Naive thymus-derived CD4-positive, alpha-beta T cell (primary cell): ENCODE measurements at regions of chr7 and their contacts with region 1.

Region 1: DNA sequence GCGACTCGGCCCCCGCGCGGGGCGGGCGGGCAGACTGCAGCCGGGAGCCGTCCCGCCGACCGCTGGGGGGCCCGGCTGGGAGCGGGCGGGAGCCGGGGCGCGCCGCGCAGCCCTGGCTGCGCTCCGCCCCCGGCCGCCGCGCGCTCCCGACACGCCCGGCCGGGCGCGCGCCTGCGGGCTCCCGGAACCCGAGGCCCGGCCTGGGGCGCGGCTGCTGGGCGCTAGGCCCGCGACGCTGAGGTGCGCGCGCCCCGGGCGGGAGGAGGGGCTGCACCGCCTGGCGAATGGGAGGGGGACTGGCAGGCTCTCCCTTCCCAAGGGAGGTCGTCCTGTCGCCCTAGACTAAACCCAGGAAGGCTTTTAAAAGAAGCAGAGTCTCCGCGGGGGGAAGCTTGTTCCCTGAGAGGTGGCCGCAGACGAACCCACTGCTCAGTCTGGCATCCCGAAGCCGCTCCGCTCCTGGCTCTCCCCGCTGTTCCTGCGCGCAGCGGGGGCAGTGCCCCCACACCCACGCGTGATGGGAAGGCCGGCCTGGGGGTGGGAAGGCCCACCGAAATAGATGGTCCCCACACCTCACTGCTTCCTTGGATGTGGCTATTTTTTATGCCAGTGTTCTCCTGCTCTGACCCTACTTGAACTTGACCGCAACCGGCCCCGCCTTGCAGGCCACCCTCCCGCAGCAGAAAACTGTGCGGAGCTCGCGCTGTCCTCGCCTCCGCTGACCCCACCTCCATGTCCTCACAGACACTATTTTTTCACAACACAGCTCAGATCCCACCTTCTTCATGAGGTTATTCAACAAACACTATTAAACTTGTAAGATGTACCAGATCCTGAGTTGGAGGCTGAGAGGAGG is at the start of gene VOPP1:
- DNase-seq: peak; percentile 40 to 79 (median 66)
- ATAC-seq: peak; percentile 81
- H3K4me3 ChIP-seq: peak within 1 kb of the TSS; percentile 87
- H3K4me3 Mint-ChIP-seq: peak within 1 kb of the TSS; percentile 87 to 100 (median 94)
- H3K27ac ChIP-seq: peak within 1 kb of the TSS; percentile 79
- H3K27ac Mint-ChIP-seq: peak within 1 kb of the TSS; percentile 85 to 96 (median 92)
- H3K4me1 ChIP-seq: peaks cover 42 to 45% of the 10 kb centered on the region in 2 donors
- H3K4me1 Mint-ChIP-seq: peaks cover 45 to 65% (median 60%) of the 10 kb centered on the region in 7 donors
- H3K27me3 ChIP-seq: no peaks in the 10 kb centered on the region
- H3K27me3 Mint-ChIP-seq: no peaks in the 10 kb centered on the region
- total RNA-seq, gene VOPP1: 66.2 to 111 (median 82.0) TPM

Region 2: DNA sequence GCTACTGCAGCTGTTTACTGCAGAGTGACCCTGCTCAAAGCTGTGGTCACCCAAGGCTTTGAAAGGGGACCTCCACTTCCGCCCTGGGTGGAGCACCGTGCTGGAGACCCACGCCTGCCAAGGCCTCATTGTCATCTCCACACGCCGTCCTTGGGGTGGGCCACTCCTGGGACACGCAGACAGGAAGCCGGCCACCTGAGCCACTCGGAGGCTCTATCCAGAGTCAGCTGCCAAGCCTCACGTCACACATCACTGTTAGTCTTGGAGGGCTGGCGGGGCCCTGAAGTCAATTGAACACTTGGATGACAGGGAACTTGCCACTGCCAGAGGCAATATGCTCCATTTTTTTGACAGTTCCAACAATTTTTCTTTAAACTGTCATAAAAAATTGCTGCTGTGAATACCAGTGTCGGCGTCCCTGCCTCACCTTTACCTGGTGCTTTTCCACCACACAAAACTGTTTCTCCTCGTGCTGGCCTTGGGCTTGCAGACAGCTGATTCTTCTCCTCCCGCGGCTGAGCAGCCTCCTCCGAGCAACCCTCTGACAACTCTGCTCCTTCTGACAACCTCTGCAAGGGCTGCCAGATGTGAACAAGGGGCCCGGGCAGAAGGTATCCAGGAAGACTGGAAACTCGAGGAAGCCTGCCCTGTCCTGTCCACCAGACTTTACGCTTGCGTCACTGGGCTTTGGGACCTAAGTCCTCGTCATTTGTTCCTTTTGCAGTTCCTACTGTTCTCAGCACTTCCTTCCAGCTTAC is 471.9 kb before region 1 on chr7:
- CTCF ChIA-PET with region 1: no interaction called
- POLR2A ChIA-PET with region 1: no interaction called
- intact Hi-C with region 1: no loop called
- DNase-seq: no peak
- ATAC-seq: no peak
- H3K4me3 ChIP-seq: no peak overlapping the region
- H3K4me3 Mint-ChIP-seq: no peak overlapping the region
- H3K27ac ChIP-seq: no peak overlapping the region
- H3K27ac Mint-ChIP-seq: no peak overlapping the region
- H3K4me1 ChIP-seq: no peaks in the 10 kb centered on the region
- H3K4me1 Mint-ChIP-seq: peaks cover 0 to 11% (median 0%) of the 10 kb centered on the region in 7 donors
- H3K27me3 ChIP-seq: no peaks in the 10 kb centered on the region
- H3K27me3 Mint-ChIP-seq: peaks cover 25 to 48% (median 36%) of the 10 kb centered on the region in 5 donors

Region 3: GRCh38 chr7:55140221-55140940 is 432.2 kb before region 1 on chr7:
- CTCF ChIA-PET with region 1: no interaction called
- POLR2A ChIA-PET with region 1: no interaction called
- intact Hi-C with region 1: no loop called
- DNase-seq: no peak
- ATAC-seq: no peak
- H3K4me3 ChIP-seq: no peak overlapping the region
- H3K4me3 Mint-ChIP-seq: no peak overlapping the region
- H3K27ac ChIP-seq: no peak overlapping the region
- H3K27ac Mint-ChIP-seq: no peak overlapping the region
- H3K4me1 ChIP-seq: no peaks in the 10 kb centered on the region
- H3K4me1 Mint-ChIP-seq: peaks cover 0 to 6% (median 0%) of the 10 kb centered on the region in 7 donors
- H3K27me3 ChIP-seq: no peaks in the 10 kb centered on the region
- H3K27me3 Mint-ChIP-seq: peaks cover 9 to 20% (median 11%) of the 10 kb centered on the region in 5 donors

Region 4: DNA sequence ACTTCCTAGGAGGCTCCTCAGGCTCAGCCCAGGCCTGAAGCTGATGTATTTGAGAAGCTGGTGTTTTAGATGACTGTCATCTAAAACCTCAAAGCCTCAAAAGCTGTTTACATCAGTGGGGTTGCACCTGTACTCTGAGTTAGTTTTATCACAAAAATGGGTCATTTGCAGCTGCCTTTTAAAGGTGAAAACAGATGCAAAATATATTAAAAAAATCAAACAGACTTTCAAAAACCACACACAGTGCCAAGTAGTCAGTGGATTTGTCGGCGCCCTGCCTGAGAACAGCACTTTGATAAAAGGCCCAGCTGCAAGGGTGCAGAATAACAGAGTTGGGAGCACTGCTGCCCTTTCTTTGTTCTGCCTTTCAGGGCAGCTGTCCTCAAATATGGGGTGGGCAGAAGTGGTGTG is 103.3 kb before region 1 on chr7:
- CTCF ChIA-PET with region 1: no interaction called
- POLR2A ChIA-PET with region 1: interaction called, 40 read pairs
- intact Hi-C with region 1: loop called (anchors 1 to 2 kb)
- DNase-seq: peak in 7 of 9 donors; percentile 57 to 85 (median 76)
- ATAC-seq: peak; percentile 86
- H3K4me3 ChIP-seq: peak overlapping the region; percentile 21
- H3K4me3 Mint-ChIP-seq: peak overlapping the region; percentile 33 to 75 (median 68)
- H3K27ac ChIP-seq: peak overlapping the region; percentile 70
- H3K27ac Mint-ChIP-seq: peak overlapping the region; percentile 85 to 97 (median 93)
- H3K4me1 ChIP-seq: peaks cover 31 to 76% of the 10 kb centered on the region in 2 donors
- H3K4me1 Mint-ChIP-seq: peaks cover 25 to 86% (median 74%) of the 10 kb centered on the region in 7 donors
- H3K27me3 ChIP-seq: no peaks in the 10 kb centered on the region
- H3K27me3 Mint-ChIP-seq: no peaks in the 10 kb centered on the region

Region 5: DNA sequence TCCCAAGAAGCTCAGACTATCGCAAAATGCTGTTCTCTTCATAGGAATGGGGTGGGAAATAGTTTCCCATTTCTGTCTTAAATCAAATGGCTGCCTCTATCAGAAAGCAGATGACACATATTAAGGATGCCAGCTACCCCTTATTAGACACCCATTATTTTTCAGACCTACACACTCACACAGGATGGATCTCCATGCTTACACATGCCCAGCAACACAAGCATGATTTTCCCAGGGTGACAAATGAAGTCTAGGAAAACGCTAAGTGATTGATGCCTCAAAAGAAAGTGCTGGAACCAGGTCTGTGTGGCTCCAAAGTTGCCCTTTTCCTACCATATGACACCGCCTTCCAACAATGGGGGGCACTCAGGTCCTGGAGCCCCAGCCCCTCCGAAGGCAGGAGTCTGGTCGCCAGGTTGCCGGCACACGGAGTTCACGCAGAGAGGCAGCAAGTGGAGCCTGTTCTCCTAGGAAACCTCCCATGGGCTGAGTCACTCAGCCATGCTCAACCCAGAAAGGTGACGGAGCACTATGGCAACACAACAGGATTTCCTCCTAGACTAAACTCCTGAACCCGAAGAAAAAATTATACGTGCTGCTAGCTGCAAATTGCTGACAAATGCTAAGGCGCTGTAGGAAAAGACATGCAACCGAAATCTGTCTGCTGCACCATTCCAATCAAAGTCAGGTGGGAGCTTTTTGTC is 20.1 kb before region 1 on chr7:
- CTCF ChIA-PET with region 1: no interaction called
- POLR2A ChIA-PET with region 1: interaction called, 5 read pairs
- intact Hi-C with region 1: loop called (anchors 2 kb)
- DNase-seq: no peak
- ATAC-seq: peak; percentile 74
- H3K4me3 ChIP-seq: no peak overlapping the region
- H3K4me3 Mint-ChIP-seq: peak overlapping the region in 4 of 10 donors; percentile 19 to 29 (median 26)
- H3K27ac ChIP-seq: no peak overlapping the region
- H3K27ac Mint-ChIP-seq: peak overlapping the region in 3 of 9 donors; percentile 36 to 58 (median 39)
- H3K4me1 ChIP-seq: peaks cover 20 to 32% of the 10 kb centered on the region in 2 donors
- H3K4me1 Mint-ChIP-seq: peaks cover 65 to 100% (median 99%) of the 10 kb centered on the region in 7 donors
- H3K27me3 ChIP-seq: no peaks in the 10 kb centered on the region
- H3K27me3 Mint-ChIP-seq: no peaks in the 10 kb centered on the region

Region 6: GRCh38 chr7:55593515-55594318 is 21.1 kb after region 1 on chr7:
- CTCF ChIA-PET with region 1: interaction called, 8 read pairs
- POLR2A ChIA-PET with region 1: interaction called, 8 read pairs
- intact Hi-C with region 1: loop called (anchors 1 to 2 kb)
- DNase-seq: peak in 7 of 9 donors; percentile 40 to 79 (median 60)
- ATAC-seq: peak; percentile 60
- H3K4me3 ChIP-seq: no peak overlapping the region
- H3K4me3 Mint-ChIP-seq: no peak overlapping the region
- H3K27ac ChIP-seq: no peak overlapping the region
- H3K27ac Mint-ChIP-seq: no peak overlapping the region
- H3K4me1 ChIP-seq: peaks cover 0 to 4% of the 10 kb centered on the region in 2 donors
- H3K4me1 Mint-ChIP-seq: peaks cover 4 to 24% (median 11%) of the 10 kb centered on the region in 7 donors
- H3K27me3 ChIP-seq: no peaks in the 10 kb centered on the region
- H3K27me3 Mint-ChIP-seq: peaks cover 0 to 5% (median 2%) of the 10 kb centered on the region in 5 donors

Region 7: DNA sequence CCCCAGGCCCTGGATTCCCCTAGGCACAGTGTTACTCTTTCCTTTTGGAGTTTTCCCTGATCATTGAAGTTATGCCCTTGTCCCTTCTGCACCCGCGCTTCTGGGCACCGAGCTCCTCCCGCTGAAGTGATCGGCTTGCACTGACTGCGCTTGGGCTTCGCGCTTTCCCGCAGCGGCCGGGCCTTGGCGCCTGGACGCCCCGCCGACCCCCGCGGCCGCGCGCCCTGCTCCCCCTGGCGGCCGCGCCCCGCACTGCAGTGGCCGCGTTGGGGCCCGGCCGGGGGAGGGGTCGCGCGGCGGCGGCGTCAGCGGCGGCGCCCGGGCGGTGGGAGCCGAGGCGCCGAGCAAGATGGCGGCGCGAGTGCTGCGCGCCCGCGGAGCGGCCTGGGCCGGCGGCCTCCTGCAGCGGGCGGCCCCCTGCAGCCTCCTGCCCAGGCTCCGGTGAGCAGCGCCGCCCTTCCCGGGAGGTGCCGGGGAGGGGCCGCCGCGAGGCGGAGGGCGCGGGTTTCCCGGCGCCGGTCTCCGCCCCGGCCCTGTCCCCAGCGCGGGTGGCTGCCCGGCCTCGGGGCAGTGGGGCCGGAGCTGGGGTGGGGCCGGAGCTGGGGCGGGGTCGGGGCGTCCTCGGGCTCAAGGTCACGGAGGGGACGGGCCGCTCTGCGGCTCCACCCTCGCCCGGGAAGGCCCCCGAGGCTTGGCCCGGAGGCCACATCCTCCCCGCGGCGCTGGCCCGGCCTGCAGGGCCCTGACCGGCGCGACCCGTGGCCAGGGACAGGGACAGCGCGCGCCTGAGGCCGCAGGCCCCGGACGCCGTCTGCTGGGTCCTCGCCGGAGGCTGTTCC is 391.9 kb after region 1 on chr7 and contains the start of gene NIPSNAP2:
- CTCF ChIA-PET with region 1: no interaction called
- POLR2A ChIA-PET with region 1: interaction called, 5 read pairs
- intact Hi-C with region 1: loop called in 1 of 2 experiments (anchors 5 kb)
- DNase-seq: peak; percentile 37 to 86 (median 68)
- ATAC-seq: peak; percentile 94
- H3K4me3 ChIP-seq: peak within 1 kb of the TSS; percentile 50
- H3K4me3 Mint-ChIP-seq: peak within 1 kb of the TSS; percentile 79 to 91 (median 88)
- H3K27ac ChIP-seq: peak within 1 kb of the TSS; percentile 89
- H3K27ac Mint-ChIP-seq: peak within 1 kb of the TSS; percentile 89 to 94 (median 91)
- H3K4me1 ChIP-seq: peaks cover 10% of the 10 kb centered on the region in 2 donors
- H3K4me1 Mint-ChIP-seq: peaks cover 24 to 55% (median 42%) of the 10 kb centered on the region in 7 donors
- H3K27me3 ChIP-seq: no peaks in the 10 kb centered on the region
- H3K27me3 Mint-ChIP-seq: no peaks in the 10 kb centered on the region
- total RNA-seq, gene NIPSNAP2: 30.1 to 37.8 (median 34.4) TPM